GM12878 (cell line): ENCODE measurements at regions of chr9 and their contacts with region 1.

Region 1: GRCh38 chr9:94783102-94783664 is 56.7 kb downstream of the AOPEP start:
- DNase-seq: peak; percentile 27
- ATAC-seq: peak; percentile 90
- H3K4me3 ChIP-seq: no peak overlapping the region
- H3K27ac ChIP-seq: no peak overlapping the region
- H3K4me1 ChIP-seq: no peaks in the 10 kb centered on the region
- H3K27me3 ChIP-seq: no peaks in the 10 kb centered on the region
- CTCF ChIP-seq: peak; percentile 48 to 80 (median 71); a peak in 5 of 6 replicates
- EP300 ChIP-seq: no peak
- POLR2A ChIP-seq: no peak
- RAD21 ChIP-seq: peak; percentile 91

Region 2: GRCh38 chr9:94805585-94805984 is 22.4 kb after region 1 on chr9:
- CTCF ChIA-PET with region 1: interaction called, 8 read pairs
- POLR2A ChIA-PET with region 1: no interaction called
- RAD21 ChIA-PET with region 1: interaction called, 29 read pairs
- SMC1A ChIA-PET with region 1: interaction called, 6 read pairs
- in situ Hi-C with region 1: no loop called
- intact Hi-C with region 1: no loop called
- DNase-seq: peak; percentile 31
- ATAC-seq: 0 out of 3 replicates have a peak, but pooled peaks have one; percentile 2
- H3K4me3 ChIP-seq: peak overlapping the region; percentile 4; the same call in 1 of the 2 replicates
- H3K27ac ChIP-seq: peak overlapping the region; percentile 81
- H3K4me1 ChIP-seq: peaks cover 66% of the 10 kb centered on the region
- H3K27me3 ChIP-seq: no peaks in the 10 kb centered on the region
- CTCF ChIP-seq: no peak
- EP300 ChIP-seq: no peak
- POLR2A ChIP-seq: no peak
- RAD21 ChIP-seq: no peak

Region 3: GRCh38 chr9:94920398-94921091 is 137.4 kb after region 1 on chr9:
- CTCF ChIA-PET with region 1: interaction called, 88 read pairs
- POLR2A ChIA-PET with region 1: no interaction called
- RAD21 ChIA-PET with region 1: interaction called, 23 read pairs
- SMC1A ChIA-PET with region 1: interaction called, 66 read pairs
- in situ Hi-C with region 1: loop called (anchors 10 kb)
- intact Hi-C with region 1: loop called (anchors 1 kb)
- DNase-seq: no peak
- ATAC-seq: no peak
- H3K4me3 ChIP-seq: no peak overlapping the region
- H3K27ac ChIP-seq: no peak overlapping the region
- H3K4me1 ChIP-seq: no peaks in the 10 kb centered on the region
- H3K27me3 ChIP-seq: no peaks in the 10 kb centered on the region
- CTCF ChIP-seq: no peak
- EP300 ChIP-seq: no peak
- POLR2A ChIP-seq: no peak
- RAD21 ChIP-seq: no peak

Region 4: DNA sequence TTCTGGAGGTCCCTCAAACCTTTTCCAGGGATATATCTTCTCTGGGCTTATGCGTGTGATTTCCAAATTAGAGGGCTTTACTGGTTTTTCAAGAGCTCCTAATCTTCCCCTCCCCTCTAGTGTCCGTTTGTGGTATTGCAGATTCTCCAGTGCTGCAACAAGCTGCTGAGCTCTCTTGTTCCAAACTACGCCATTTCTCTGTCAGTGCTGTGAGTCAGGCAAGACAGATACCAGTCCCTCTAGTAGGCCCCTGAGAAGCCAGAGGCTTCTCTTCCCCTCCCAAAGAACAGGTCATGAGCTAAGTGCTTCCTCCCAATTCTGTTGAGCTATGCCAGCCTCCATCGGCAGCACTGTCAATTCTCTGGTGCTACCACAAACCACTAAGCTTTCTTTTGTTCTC is 384.8 kb after region 1 on chr9:
- CTCF ChIA-PET with region 1: interaction called, 15 read pairs
- POLR2A ChIA-PET with region 1: no interaction called
- RAD21 ChIA-PET with region 1: interaction called, 5 read pairs
- SMC1A ChIA-PET with region 1: interaction called, 7 read pairs
- in situ Hi-C with region 1: no loop called
- intact Hi-C with region 1: no loop called
- DNase-seq: no peak
- ATAC-seq: peak; percentile 72
- H3K4me3 ChIP-seq: no peak overlapping the region
- H3K27ac ChIP-seq: no peak overlapping the region
- H3K4me1 ChIP-seq: peaks cover 5% of the 10 kb centered on the region; the same call in 1 of the 2 replicates
- H3K27me3 ChIP-seq: no peaks in the 10 kb centered on the region
- CTCF ChIP-seq: peak; percentile 56 to 87 (median 81)
- EP300 ChIP-seq: no peak
- POLR2A ChIP-seq: no peak
- RAD21 ChIP-seq: peak; percentile 59